MCF 10A (cell line): ENCODE measurements at regions of chr14 and their contacts with region 1.

Region 1: GRCh38 chr14:102655170-102655569 is 62.7 kb downstream of the RCOR1 start:
- DNase-seq: peak; percentile 50
- H3K4me3 Mint-ChIP-seq: no peak overlapping the region
- H3K27ac Mint-ChIP-seq: peak overlapping the region; percentile 39
- H3K4me1 Mint-ChIP-seq: peaks cover 29% of the 10 kb centered on the region
- H3K27me3 Mint-ChIP-seq: no peaks in the 10 kb centered on the region
- CTCF ChIP-seq: no peak

Region 2: DNA sequence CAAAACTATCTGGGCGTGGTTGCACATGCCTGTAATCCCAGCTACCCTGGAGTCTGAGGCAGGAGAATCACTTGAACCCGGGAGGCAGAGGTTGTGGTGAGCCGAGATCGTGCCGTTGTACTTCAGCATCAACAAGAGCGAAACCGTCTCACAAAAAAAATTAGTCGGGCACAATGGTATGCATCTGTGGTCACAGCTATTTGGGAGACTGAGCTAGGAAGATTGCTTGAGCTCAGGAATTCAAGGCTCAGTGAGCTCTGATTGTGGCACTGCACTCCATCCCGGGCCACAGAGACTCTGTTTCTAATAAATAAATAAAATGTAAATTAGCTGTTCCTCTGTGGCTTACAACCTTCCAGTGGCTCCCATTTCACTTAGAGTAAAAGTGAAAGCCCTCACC is 34.8 kb before region 1 on chr14:
- CTCF ChIA-PET with region 1: no interaction called
- POLR2A ChIA-PET with region 1: no interaction called
- intact Hi-C with region 1: loop called (anchors 2 kb)
- DNase-seq: no peak
- H3K4me3 Mint-ChIP-seq: no peak overlapping the region
- H3K27ac Mint-ChIP-seq: no peak overlapping the region
- H3K4me1 Mint-ChIP-seq: peaks cover 36% of the 10 kb centered on the region
- H3K27me3 Mint-ChIP-seq: no peaks in the 10 kb centered on the region
- CTCF ChIP-seq: no peak

Region 3: DNA sequence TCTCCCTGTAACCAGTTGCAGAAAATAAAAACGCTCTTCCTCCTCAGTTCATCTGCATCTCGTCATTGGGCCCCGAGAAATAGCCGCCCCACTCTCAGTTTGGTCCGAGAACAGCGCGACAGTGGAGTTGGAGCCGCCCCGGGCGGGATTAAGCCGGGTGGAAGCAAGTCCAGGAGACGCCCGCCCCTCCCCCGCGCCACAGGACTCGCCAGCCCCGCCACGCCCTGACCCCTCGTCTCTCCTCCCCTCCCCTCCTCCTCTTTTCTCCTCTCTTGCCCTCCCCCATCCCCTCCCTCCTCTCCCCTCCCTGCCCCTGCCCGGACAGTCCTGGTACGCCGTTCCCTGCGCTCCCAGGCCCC is 551.8 kb after region 1 on chr14:
- CTCF ChIA-PET with region 1: no interaction called
- POLR2A ChIA-PET with region 1: no interaction called
- intact Hi-C with region 1: no loop called
- DNase-seq: no peak
- H3K4me3 Mint-ChIP-seq: no peak overlapping the region
- H3K27ac Mint-ChIP-seq: no peak overlapping the region
- H3K4me1 Mint-ChIP-seq: no peaks in the 10 kb centered on the region
- H3K27me3 Mint-ChIP-seq: no peaks in the 10 kb centered on the region
- CTCF ChIP-seq: no peak